Activated B cell treated with CpG ODN at 0.5 μM for 24 hours (primary cell): ENCODE measurements at regions of chr10 and their contacts with region 1.

Region 1: GRCh38 chr10:100827819-100828737 is 82.7 kb downstream of the PAX2 start:
- DNase-seq: peak; percentile 44
- ATAC-seq: peak; percentile 48
- H3K4me3 Mint-ChIP-seq: peak overlapping the region; percentile 83
- H3K27ac Mint-ChIP-seq: peak overlapping the region; percentile 53
- H3K4me1 Mint-ChIP-seq: peaks cover 41% of the 10 kb centered on the region
- H3K27me3 Mint-ChIP-seq: peaks cover 60% of the 10 kb centered on the region
- CTCF ChIP-seq: no peak

Region 2: GRCh38 chr10:99532687-99533495 is 1295.2 kb before region 1 on chr10 and contains the start of gene NKX2-3:
- CTCF ChIA-PET with region 1: no interaction called
- POLR2A ChIA-PET with region 1: no interaction called
- intact Hi-C with region 1: loop called (anchors 10 kb)
- DNase-seq: no peak
- ATAC-seq: no peak
- H3K4me3 Mint-ChIP-seq: peak within 1 kb of the TSS; percentile 78
- H3K27ac Mint-ChIP-seq: no peak within 1 kb of the TSS
- H3K4me1 Mint-ChIP-seq: peaks cover 71% of the 10 kb centered on the region
- H3K27me3 Mint-ChIP-seq: peaks cover 80% of the 10 kb centered on the region
- CTCF ChIP-seq: no peak
- total RNA-seq, gene NKX2-3: not detected in 2 replicates

Region 3: DNA sequence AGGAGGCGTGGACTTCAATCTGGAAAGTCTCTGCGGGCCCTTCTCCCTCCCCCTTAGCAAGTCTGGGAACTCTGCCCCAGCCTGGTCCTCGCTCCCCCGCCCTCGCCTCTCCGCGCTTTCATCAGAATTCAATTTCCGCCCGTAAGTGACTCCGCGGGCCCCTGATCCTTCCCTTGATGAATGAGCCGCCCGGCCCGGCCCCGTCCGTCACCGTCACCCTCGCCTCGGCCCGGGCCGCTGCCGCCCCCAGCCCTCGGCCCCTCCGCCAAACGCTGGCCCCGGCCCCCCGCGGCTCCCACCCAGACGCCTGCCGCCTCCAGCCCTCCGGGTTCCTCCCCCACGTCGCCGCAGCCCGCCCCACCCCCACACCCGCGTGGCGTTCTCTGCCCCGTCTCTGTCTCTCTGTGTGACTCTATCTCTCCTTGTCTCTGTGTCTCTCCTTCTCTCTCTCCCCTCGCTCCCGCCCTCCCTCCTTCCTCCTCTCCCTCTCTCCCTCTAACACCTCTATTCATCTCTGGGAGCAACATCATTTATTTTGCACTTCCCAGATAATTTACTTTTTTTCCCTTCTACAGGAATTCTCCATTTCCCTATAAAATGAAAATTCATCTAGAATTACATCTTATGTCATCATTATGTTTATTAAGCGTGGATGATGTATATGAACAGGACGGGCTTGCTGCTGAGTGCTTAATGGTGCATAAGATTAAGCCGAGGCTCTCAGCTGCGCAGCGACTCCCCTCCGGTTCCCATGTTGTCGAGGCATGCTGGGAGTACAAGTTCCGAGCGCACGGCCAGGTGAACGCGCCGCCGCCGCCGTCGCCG is 173.9 kb before region 1 on chr10:
- CTCF ChIA-PET with region 1: no interaction called
- POLR2A ChIA-PET with region 1: no interaction called
- intact Hi-C with region 1: loop called (anchors 5 kb)
- DNase-seq: no peak
- ATAC-seq: peak; percentile 28
- H3K4me3 Mint-ChIP-seq: peak overlapping the region; percentile 70
- H3K27ac Mint-ChIP-seq: no peak overlapping the region
- H3K4me1 Mint-ChIP-seq: peaks cover 25% of the 10 kb centered on the region
- H3K27me3 Mint-ChIP-seq: peaks cover 62% of the 10 kb centered on the region
- CTCF ChIP-seq: no peak

Region 4: GRCh38 chr10:100912605-100913469 is 84.8 kb after region 1 on chr10 and contains the start of gene SLF2:
- CTCF ChIA-PET with region 1: interaction called, 3 read pairs
- POLR2A ChIA-PET with region 1: no interaction called
- intact Hi-C with region 1: loop called (anchors 1 kb)
- DNase-seq: peak; percentile 82
- ATAC-seq: peak; percentile 97
- H3K4me3 Mint-ChIP-seq: peak within 1 kb of the TSS; percentile 99
- H3K27ac Mint-ChIP-seq: peak within 1 kb of the TSS; percentile 96
- H3K4me1 Mint-ChIP-seq: peaks cover 33% of the 10 kb centered on the region
- H3K27me3 Mint-ChIP-seq: no peaks in the 10 kb centered on the region
- CTCF ChIP-seq: no peak
- total RNA-seq, gene SLF2: 29.9 and 35.5 TPM in 2 replicates

Region 5: GRCh38 chr10:101214446-101215396 is 386.6 kb after region 1 on chr10:
- CTCF ChIA-PET with region 1: no interaction called
- POLR2A ChIA-PET with region 1: no interaction called
- intact Hi-C with region 1: loop called (anchors 5 kb)
- DNase-seq: peak; percentile 72
- ATAC-seq: peak; percentile 75
- H3K4me3 Mint-ChIP-seq: peak overlapping the region; percentile 60
- H3K27ac Mint-ChIP-seq: peak overlapping the region; percentile 68
- H3K4me1 Mint-ChIP-seq: peaks cover 32% of the 10 kb centered on the region
- H3K27me3 Mint-ChIP-seq: peaks cover 56% of the 10 kb centered on the region
- CTCF ChIP-seq: peak; percentile 73

Region 6: DNA sequence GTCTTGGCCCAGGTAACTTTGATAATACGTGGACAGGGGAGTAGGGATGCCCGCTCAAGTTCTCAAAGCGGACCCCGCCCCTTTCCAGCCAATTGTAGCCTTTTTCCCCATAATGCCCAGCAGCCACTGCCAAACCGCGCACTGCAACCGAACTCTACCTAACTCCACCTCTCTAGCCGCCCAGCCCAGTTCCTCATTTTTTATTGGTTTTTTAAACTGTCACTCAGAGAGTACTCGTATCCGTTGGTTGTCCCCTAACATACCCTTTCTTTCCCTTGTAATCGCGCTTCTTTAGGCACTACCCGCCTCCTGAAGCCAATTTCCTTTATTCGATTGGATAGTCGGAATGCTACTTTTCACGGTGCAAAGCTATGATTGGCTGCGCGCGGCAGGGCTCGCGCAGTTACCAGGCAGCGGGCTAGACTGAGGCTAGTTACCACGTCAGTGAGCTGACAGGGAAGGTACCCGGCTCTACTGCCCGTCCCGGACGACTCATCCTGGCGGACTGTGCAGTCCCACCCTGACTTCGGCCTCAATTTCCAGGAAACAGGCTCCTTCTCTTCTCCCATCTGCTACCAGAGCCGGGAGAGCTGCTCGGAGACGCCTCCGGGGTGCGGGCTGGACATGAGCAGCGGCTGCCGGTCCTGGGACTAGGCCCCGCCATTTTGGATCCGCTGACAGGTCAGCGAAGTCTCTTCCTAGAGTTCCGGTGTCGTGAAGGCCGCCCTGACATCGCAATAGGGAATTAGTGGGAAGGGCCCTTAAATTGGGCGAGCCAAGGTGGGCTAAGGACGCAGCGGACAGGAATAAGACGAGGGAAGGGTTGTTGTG is 1417.2 kb after region 1 on chr10 and contains the start of gene GBF1:
- CTCF ChIA-PET with region 1: no interaction called
- POLR2A ChIA-PET with region 1: no interaction called
- intact Hi-C with region 1: no loop called
- DNase-seq: peak; percentile 76
- ATAC-seq: peak; percentile 88
- H3K4me3 Mint-ChIP-seq: peak within 1 kb of the TSS; percentile 98
- H3K27ac Mint-ChIP-seq: peak within 1 kb of the TSS; percentile 91
- H3K4me1 Mint-ChIP-seq: peaks cover 58% of the 10 kb centered on the region
- H3K27me3 Mint-ChIP-seq: peaks cover 22% of the 10 kb centered on the region
- CTCF ChIP-seq: no peak
- total RNA-seq, gene GBF1: 40.8 and 44.3 TPM in 2 replicates